Dorsolateral prefrontal cortex (tissue), 120 donors: ENCODE measurements at regions of chr6 and their contacts with region 1.

Region 1: DNA sequence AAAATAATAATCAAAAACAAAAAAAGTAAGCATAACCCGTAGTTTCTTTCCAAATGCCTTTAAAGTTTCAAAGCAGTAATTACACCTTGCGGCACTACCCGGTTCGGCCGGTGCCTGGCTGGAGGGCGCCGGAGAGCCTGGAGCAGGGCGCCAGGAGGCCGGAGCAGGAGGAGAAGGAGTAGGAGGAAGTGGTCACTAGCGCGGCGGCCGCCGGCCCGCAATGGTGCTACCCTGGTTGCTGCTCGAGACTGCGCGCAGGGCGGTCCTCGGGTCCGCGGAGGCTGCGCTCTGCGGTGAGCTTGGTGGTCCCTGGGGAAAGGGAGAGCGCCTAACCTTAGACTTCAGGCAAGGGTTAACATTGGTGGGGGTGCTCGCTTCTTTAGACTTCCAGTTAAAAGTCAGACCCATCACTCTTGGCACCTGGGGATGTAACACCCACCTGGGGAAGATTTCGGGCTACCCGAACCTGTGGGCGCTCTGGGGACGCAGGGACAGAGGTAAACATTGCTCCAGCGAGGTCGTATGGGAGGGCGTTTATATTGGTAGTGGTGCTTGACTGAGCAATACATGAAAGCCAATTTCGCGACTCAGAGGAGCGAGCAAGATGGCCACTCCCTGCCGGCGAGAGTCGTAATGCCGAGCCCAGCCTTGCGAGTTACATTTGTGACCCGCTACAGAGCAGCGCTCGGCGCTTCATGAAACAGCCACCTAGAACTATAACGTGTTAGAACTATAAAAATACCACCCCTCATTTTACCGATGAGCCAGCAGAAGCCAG is 5.8 kb upstream of the USP45 start:
- DNase-seq: peak; percentile 49 to 87 (median 80)
- H3K4me3 ChIP-seq: peak overlapping the region; percentile 47 to 96 (median 82)
- H3K27ac ChIP-seq: peak overlapping the region; percentile 53 to 97 (median 92)
- H3K27me3 ChIP-seq: no peaks in the 10 kb centered on the region
- CTCF ChIP-seq: peak; percentile 52 to 90 (median 77)

Region 2: DNA sequence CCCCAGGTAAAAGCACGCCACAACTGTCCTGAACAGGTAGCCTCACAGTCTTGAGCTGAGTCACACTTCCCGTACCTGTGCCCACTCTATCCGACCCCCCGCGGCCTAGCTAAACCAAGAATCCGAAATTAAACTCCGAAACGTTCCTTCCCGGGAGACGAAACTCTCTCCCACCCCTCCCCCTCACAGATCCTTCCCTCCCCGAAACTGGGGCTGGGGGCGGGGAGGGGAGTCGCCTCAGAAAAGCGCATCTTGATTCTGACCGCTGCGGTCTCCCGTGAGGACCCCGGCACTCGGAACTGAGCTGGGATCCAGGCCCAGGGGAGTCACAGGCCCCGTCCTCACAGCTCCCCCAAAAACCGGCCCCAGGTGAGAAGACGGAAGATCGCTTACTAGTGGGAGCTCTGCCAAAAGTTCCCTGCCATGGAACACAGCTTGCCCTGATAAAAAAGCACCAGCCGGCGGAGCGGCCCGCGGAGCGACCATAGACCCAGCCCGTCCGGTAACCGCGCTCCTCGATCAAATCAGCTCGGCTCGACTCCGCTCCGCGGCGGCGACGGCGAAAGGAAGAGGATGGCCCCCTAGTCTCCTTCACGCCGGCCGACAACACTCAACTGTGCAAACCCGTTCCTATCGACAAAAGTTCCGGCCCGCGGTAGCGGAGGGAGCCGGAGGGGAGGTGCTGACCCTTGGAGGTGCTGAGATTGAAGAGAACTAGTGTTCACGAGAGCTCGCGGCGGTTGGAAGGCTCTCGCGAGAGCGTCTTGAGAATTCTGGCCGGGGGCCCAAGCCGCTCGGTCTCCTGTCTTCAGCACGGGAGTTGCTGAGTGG is 47.3 kb after region 1 on chr6 and contains the start of gene CCNC:
- intact Hi-C with region 1: loop called (anchors 2 to 5 kb)
- DNase-seq: peak; percentile 67 to 92 (median 88)
- H3K4me3 ChIP-seq: peak within 1 kb of the TSS; percentile 65 to 99 (median 92)
- H3K27ac ChIP-seq: peak within 1 kb of the TSS in 53 of 59 donors; percentile 13 to 90 (median 67)
- H3K27me3 ChIP-seq: no peaks in the 10 kb centered on the region
- CTCF ChIP-seq: peak in 29 of 56 donors; percentile 3 to 52 (median 27)
- total RNA-seq, gene CCNC: 26.4 to 67.5 (median 43.5) TPM

Region 3: DNA sequence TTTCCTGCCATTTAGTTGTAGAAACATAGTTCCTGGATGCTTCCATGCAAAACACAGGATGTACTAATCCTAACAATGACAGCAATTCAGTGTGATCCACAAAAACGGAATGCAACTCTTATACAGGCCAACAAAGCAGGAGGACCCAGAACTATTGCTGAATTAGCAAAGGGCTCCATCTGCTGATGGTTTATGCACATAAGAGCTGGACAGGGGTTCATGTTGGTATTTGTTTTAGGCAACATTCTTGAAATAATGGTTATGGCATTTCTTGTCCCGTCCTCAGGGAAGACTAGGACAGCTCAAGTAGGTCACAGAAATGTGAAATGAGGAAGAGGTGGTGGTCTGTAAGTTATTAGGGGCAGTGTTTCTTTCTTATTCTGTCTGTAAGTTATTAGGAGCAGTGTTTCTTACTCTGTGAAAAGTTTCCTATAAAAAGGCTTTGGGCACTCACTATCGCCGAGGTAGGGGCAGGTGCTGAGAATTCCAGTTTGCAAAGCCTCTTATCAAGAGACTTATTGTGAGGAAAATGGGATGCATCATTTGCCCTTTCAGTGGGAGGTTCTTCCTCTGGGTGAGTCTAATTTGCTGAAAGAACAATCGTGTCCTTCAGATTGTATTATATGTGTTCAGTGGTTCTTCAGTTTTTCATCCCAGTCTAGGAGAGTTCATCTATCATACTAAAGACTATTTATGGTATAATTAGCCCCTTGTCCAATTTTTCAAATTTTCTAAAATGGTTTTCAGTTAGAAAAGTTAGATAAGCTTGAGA is 301.9 kb after region 1 on chr6:
- intact Hi-C with region 1: loop called in 1 of 2 experiments (anchors 5 kb)
- DNase-seq: peak in 3 of 10 donors; percentile 9 to 26 (median 10)
- H3K4me3 ChIP-seq: peak overlapping the region in 29 of 59 donors; percentile 0 to 56 (median 29)
- H3K27ac ChIP-seq: no peak overlapping the region
- H3K27me3 ChIP-seq: peaks cover 0 to 25% (median 0%) of the 10 kb centered on the region in 45 donors
- CTCF ChIP-seq: peak in 53 of 56 donors; percentile 24 to 66 (median 51)